CD4-positive, alpha-beta memory T cell (primary cell): ENCODE measurements at regions of chr2 and their contacts with region 1.

Region 1: DNA sequence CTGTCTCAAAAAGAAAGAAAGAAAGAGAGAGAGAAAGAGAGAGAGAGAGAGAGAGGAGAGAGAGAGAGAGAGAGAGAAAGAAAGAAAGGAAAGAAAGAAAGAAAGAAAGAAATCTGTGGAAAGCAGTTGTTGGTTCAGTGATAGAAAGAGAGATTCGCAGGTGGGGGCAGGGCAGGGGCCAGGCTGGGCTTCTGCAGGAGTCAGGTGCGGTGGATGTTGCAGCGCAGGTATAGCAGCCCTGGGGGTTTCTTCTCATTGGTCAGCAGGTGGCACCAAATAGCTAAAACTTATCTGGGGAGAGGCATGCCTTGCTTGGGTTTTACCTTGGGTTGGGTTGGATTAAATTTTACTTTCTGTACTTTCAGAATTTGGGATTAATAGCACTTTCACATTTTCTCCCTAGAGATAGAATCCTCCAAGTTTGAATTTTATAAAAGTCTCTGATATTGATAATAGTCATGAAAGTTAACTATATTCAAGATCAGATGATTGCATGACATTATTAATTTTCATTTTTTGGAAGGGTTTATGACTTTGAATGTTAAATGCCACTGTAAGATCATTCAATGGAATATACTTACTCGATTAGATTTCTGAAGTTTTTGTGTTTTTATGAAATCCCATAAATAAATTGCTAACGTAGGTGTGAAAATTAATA is 66.6 kb downstream of the SPTBN1 start:
- DNase-seq: peak; percentile 70 to 79 (median 73)
- H3K4me3 ChIP-seq: no peak overlapping the region
- H3K4me3 Mint-ChIP-seq: peak overlapping the region in 4 of 8 donors; percentile 15 to 78 (median 36)
- H3K27ac ChIP-seq: no peak overlapping the region
- H3K27ac Mint-ChIP-seq: peak overlapping the region in 5 of 7 donors; percentile 42 to 92 (median 78)
- H3K4me1 ChIP-seq: no peaks in the 10 kb centered on the region
- H3K4me1 Mint-ChIP-seq: peaks cover 4 to 6% (median 6%) of the 10 kb centered on the region in 4 donors
- H3K27me3 ChIP-seq: no peaks in the 10 kb centered on the region
- H3K27me3 Mint-ChIP-seq: peaks cover 0 to 5% of the 10 kb centered on the region in 2 donors

Region 2: DNA sequence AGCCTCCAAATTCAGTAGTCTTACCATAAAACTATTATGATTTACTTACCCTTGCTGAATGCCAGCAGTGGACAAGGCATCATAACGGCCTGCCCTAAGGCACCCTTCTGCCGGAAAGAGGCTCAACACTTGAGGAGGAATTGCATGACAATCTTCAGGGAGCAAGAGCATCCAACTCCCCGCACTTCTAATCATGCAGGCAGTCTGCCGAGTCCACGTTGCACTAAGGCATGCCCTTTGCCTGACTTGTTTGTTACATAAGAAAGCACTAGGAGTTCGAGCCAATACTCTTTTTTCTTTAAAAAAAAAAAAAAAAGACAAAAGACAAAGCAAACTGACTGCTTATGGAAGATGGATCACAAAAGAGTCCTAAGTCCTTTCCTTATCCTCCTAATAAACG is 84.5 kb before region 1 on chr2:
- CTCF ChIA-PET with region 1: no interaction called
- POLR2A ChIA-PET with region 1: no interaction called
- intact Hi-C with region 1: no loop called
- DNase-seq: no peak
- H3K4me3 ChIP-seq: no peak overlapping the region
- H3K4me3 Mint-ChIP-seq: no peak overlapping the region
- H3K27ac ChIP-seq: no peak overlapping the region
- H3K27ac Mint-ChIP-seq: no peak overlapping the region
- H3K4me1 ChIP-seq: no peaks in the 10 kb centered on the region
- H3K4me1 Mint-ChIP-seq: no peaks in the 10 kb centered on the region
- H3K27me3 ChIP-seq: no peaks in the 10 kb centered on the region
- H3K27me3 Mint-ChIP-seq: peaks cover 3 to 8% of the 10 kb centered on the region in 2 donors

Region 3: GRCh38 chr2:54535599-54536195 is 12.9 kb after region 1 on chr2:
- CTCF ChIA-PET with region 1: interaction called, 12 read pairs
- POLR2A ChIA-PET with region 1: no interaction called
- intact Hi-C with region 1: no loop called
- DNase-seq: no peak
- H3K4me3 ChIP-seq: no peak overlapping the region
- H3K4me3 Mint-ChIP-seq: no peak overlapping the region
- H3K27ac ChIP-seq: no peak overlapping the region
- H3K27ac Mint-ChIP-seq: no peak overlapping the region
- H3K4me1 ChIP-seq: no peaks in the 10 kb centered on the region
- H3K4me1 Mint-ChIP-seq: peaks cover 0 to under 1% (median 0%) of the 10 kb centered on the region in 4 donors
- H3K27me3 ChIP-seq: no peaks in the 10 kb centered on the region
- H3K27me3 Mint-ChIP-seq: no peaks in the 10 kb centered on the region

Region 4: DNA sequence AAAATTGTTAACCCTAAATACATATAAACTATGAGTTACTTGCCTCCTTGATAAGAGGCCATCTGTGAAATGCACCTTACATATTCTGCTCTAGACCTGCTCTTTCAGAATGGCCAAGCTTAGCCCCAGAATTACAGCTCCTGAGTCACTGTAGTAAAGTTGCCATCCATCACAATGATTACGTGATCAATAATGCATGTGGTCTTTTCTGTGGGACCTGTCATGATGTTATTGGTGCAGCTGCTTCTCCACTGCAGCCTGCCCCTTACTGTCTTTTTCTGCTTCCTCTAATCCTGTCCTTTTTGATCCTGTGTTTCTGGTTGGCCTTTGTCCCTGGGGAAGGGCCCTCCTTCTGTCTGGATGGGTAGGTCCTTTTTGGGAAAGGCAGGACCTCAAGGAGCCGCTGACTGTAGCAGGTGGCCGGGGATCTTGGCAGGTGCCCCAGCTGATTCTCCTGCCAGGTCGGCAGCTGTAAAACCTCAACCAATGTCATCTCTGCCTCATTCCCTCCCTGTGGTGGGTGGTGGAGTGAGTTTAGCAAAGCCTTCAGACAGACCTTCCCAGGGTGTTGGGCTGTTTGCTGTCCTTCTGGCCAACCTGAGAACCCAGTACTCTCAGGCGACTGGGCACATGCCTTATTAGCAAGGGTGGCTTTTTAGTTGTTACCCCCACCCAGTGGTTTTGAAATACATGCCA is 74.5 kb after region 1 on chr2:
- CTCF ChIA-PET with region 1: interaction called, 58 read pairs
- POLR2A ChIA-PET with region 1: no interaction called
- intact Hi-C with region 1: loop called (anchors 2 kb)
- DNase-seq: peak in 1 of 5 donors; percentile 32
- H3K4me3 ChIP-seq: peak overlapping the region in 1 of 2 donors; percentile 18
- H3K4me3 Mint-ChIP-seq: peak overlapping the region; percentile 52 to 90 (median 86)
- H3K27ac ChIP-seq: peak overlapping the region; percentile 48
- H3K27ac Mint-ChIP-seq: peak overlapping the region; percentile 92 to 98 (median 97)
- H3K4me1 ChIP-seq: peaks cover 89% of the 10 kb centered on the region
- H3K4me1 Mint-ChIP-seq: peaks cover 64 to 87% (median 83%) of the 10 kb centered on the region in 4 donors
- H3K27me3 ChIP-seq: no peaks in the 10 kb centered on the region
- H3K27me3 Mint-ChIP-seq: no peaks in the 10 kb centered on the region

Region 5: DNA sequence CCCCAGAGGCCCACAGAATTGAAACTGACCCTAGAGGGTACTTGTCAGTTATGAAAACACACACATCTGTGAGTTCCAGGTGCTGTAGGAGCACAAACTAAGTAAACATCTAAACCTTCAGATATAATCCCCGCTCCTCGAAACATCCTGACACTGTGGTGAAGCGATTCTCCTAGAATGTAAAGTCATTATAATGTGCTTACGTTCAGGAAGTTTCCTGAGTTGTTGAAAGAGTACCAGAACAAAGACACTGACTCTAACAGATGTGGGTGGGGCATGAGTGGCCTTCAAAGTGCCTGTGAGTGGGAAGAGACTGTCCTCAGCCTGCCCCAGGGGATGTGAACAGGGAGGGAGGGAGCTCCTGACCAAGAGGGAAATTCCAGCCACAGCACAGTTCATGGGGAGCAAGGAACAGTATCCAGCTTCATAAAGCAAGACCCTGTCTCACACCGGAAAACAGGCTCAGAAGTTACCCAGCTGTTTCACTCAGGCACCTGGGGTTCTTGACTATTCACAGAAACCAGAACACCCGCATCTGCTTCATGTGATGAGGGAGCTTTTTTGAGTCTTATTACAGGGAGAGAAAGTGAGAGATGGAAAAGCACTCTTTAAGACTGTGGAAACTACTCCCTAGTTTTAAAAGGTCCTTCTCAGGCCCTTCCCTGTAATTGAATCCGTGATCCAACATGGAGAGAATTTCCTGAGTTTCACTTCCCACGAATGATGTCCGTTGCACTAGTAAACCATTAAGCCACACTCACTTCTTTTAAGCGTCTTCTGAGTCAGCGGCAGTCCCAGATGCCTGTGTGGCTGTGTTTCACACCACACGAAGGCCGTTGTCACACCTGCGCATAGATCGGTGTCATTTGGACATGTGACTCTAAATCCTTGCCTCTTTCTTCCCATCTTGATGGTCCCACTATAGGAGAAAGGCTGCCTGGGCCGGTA is 112.1 kb after region 1 on chr2:
- CTCF ChIA-PET with region 1: interaction called, 9 read pairs
- POLR2A ChIA-PET with region 1: no interaction called
- intact Hi-C with region 1: loop called (anchors 2 kb)
- DNase-seq: peak in 4 of 5 donors; percentile 5 to 33 (median 18)
- H3K4me3 ChIP-seq: no peak overlapping the region
- H3K4me3 Mint-ChIP-seq: peak overlapping the region in 7 of 8 donors; percentile 18 to 66 (median 50)
- H3K27ac ChIP-seq: no peak overlapping the region
- H3K27ac Mint-ChIP-seq: peak overlapping the region; percentile 68 to 88 (median 76)
- H3K4me1 ChIP-seq: peaks cover 14% of the 10 kb centered on the region
- H3K4me1 Mint-ChIP-seq: peaks cover 21 to 50% (median 26%) of the 10 kb centered on the region in 4 donors
- H3K27me3 ChIP-seq: no peaks in the 10 kb centered on the region
- H3K27me3 Mint-ChIP-seq: no peaks in the 10 kb centered on the region

Region 6: DNA sequence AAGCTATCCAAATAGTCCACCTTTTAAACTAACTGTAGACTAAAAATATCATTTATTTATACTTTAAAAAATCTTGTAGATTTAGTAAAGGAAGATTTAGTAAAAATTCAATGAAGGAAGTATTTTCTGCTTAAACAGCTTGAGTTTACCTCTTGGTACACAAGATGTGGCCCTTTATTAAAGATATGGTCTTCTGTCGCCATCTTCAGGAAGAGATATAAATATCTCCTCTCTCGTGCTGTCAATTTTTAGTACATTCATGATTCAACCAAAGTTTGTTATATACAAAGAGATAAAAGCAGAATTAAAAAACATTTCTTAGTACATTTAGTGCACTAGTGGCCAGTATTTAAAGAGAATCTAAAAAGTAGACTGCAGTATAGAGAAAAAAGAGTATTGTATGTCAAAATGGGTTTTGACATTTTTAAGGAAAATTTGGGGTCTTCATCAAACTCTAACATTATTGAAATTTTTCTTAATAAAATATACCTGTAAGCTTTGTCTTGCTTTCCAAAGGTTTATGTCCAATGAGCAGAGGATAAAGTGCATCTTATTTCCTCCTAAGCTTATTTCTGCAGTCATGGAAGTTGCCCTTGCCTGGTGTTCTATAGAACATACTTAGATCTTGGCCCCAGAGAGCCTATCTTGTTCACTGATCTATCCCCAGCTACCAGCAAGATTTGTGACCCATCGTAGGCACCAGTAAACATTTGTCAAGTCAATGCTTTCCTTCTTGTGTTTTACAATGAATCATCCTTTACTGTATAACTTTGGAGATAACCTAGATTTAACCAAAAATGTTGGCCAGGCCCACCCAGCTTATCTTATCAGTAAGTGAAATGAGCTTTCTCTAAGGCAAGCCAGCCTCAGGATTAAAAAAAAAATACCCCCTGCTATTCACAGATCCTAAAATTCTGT is 182.2 kb after region 1 on chr2:
- CTCF ChIA-PET with region 1: interaction called, 250 read pairs
- POLR2A ChIA-PET with region 1: interaction called, 9 read pairs
- intact Hi-C with region 1: loop called (anchors 1 kb)
- DNase-seq: peak in 4 of 5 donors; percentile 56 to 63 (median 56)
- H3K4me3 ChIP-seq: no peak overlapping the region
- H3K4me3 Mint-ChIP-seq: no peak overlapping the region
- H3K27ac ChIP-seq: no peak overlapping the region
- H3K27ac Mint-ChIP-seq: no peak overlapping the region
- H3K4me1 ChIP-seq: peaks cover 10% of the 10 kb centered on the region
- H3K4me1 Mint-ChIP-seq: peaks cover 0 to 4% (median 2%) of the 10 kb centered on the region in 4 donors
- H3K27me3 ChIP-seq: no peaks in the 10 kb centered on the region
- H3K27me3 Mint-ChIP-seq: peaks cover 12 to 13% of the 10 kb centered on the region in 2 donors

Region 7: GRCh38 chr2:54741250-54741649 is 218.5 kb after region 1 on chr2:
- CTCF ChIA-PET with region 1: no interaction called
- POLR2A ChIA-PET with region 1: no interaction called
- intact Hi-C with region 1: no loop called
- DNase-seq: no peak
- H3K4me3 ChIP-seq: no peak overlapping the region
- H3K4me3 Mint-ChIP-seq: no peak overlapping the region
- H3K27ac ChIP-seq: no peak overlapping the region
- H3K27ac Mint-ChIP-seq: no peak overlapping the region
- H3K4me1 ChIP-seq: no peaks in the 10 kb centered on the region
- H3K4me1 Mint-ChIP-seq: no peaks in the 10 kb centered on the region
- H3K27me3 ChIP-seq: no peaks in the 10 kb centered on the region
- H3K27me3 Mint-ChIP-seq: peaks cover 13 to 17% of the 10 kb centered on the region in 2 donors

Region 8: DNA sequence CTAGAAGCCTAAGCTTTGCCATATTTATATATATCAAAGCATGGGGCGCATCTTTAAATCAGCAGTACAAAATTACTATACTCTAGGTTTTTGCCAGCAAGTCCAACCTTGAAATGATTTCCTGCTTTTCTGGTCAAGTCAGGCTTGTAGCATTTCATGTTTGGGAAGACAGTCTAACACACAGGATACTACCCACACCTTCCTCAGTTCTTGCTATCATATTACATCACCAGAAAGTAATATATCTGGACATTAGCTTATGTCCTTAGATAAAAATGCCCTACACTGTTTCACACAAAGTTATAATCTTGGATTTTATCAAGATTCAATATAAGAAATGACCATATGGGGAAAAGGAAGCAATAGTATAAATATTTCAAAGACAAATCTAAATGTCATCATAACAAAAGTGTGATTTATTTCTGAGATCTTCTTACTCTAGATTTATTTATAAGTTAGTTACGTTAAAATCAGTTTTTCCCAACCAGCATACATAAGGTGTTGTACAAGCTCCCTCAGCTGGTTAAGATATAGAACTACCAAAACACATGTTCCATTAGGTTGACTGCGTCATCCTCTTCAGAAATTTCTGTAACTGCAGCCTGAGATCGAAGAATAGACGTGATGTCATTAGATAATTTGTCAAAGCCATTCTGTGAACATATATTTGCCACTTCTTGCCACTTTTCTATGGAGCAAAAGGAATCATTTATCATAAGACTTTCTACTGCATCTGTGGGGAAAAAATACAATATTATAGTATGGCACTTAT is 652.7 kb after region 1 on chr2:
- CTCF ChIA-PET with region 1: interaction called, 3 read pairs
- POLR2A ChIA-PET with region 1: no interaction called
- intact Hi-C with region 1: loop called (anchors 1 kb)
- DNase-seq: peak in 4 of 5 donors; percentile 46 to 64 (median 52)
- H3K4me3 ChIP-seq: no peak overlapping the region
- H3K4me3 Mint-ChIP-seq: peak overlapping the region in 2 of 8 donors; percentile 1 to 27
- H3K27ac ChIP-seq: no peak overlapping the region
- H3K27ac Mint-ChIP-seq: peak overlapping the region in 1 of 7 donors; percentile 44
- H3K4me1 ChIP-seq: no peaks in the 10 kb centered on the region
- H3K4me1 Mint-ChIP-seq: peaks cover 0 to 6% (median 3%) of the 10 kb centered on the region in 4 donors
- H3K27me3 ChIP-seq: no peaks in the 10 kb centered on the region
- H3K27me3 Mint-ChIP-seq: no peaks in the 10 kb centered on the region